ENCODE measurements at regions of chr1 and their contacts with region 1.

Region 1: DNA sequence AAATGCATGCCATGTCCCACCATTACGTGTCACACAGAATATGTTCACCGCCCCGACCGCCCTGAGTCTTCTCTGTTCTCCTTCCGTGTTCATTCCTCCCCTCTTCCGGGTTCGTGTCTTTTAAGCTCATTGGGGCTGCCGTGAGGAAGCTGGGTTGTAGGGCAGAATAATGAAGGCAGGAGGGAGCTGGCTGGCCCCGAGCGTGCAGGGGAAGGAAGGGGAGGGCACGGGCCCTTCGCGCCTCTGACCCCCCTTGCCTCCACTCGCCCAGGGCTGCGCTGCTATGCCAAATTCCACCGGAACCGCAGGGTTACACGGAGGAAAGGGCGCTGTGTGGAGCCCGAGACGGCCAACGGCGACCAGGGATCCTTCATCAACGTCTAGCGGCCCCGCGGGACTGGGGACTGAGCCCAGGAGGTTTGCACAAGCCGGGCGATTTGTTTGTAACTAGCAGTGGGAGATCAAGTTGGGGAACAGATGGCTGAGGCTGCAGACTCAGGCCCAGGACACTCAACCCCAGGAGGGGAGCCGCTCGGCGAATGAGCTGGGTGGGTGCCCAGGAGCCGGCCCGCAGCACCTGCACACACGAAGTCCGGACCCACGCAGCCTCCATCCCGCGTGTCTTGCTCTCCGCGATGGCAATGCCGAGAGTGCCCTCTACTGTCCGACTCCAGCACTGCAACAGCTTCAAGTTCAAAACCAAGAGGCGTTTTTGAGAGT is 16.5 kb upstream of the AGTRAP start:
- DNase-seq: peak; percentile 63
- H3K4me3 ChIP-seq: peak overlapping the region; percentile 23
- H3K27ac ChIP-seq: no peak overlapping the region
- H3K4me1 ChIP-seq: no peaks in the 10 kb centered on the region
- H3K27me3 ChIP-seq: no peaks in the 10 kb centered on the region
- CTCF ChIP-seq: peak; percentile 98

Region 2: GRCh38 chr1:11661103-11661502 is 58.4 kb before region 1 on chr1:
- CTCF ChIA-PET with region 1: interaction called, 13 read pairs
- POLR2A ChIA-PET with region 1: no interaction called
- intact Hi-C with region 1: no loop called
- DNase-seq: no peak
- H3K4me3 ChIP-seq: no peak overlapping the region
- H3K27ac ChIP-seq: no peak overlapping the region
- H3K4me1 ChIP-seq: no peaks in the 10 kb centered on the region
- H3K27me3 ChIP-seq: no peaks in the 10 kb centered on the region
- CTCF ChIP-seq: no peak

Region 3: DNA sequence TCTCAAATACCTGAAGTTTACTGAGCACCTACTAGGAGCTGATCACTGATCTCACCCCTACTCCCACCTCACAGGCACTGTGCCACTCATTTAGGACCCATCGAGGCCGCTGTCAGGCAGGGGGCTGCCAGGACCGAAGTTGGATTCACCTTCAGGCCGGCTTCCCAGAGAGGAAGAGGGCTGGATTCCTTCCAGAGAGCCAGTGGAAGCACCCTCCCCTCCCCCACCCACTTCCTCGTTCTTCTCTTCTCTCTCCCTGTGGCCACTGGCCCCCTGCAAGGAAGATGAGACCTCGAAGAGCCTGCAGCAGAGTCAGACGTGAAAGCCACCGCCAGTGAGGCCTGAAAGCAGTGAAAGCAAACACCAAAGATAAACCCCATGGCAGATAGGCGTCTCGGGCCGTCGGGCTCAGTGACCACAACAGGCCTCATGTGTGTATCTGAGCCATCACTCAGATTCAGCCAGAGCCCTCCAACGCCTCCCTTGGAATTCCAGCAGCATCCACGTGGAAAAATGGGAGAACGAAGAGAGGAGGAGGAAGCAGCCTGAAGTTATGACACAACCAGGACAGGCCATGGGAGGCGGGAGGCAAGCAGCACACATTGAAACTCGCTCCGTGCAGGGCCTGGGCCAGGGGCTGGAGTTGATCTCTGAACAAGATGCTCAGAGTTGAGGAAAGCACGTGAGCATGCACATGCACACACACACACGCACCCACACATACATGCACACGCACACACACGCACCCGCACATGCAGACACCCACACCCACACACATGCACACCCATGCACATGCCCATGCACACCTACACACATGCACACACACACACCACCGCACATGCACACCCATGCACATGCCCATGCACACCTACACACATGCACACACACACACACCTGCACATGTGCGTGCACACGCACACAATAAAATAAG is 10.3 kb after region 1 on chr1:
- CTCF ChIA-PET with region 1: no interaction called
- POLR2A ChIA-PET with region 1: no interaction called
- intact Hi-C with region 1: no loop called
- DNase-seq: no peak
- H3K4me3 ChIP-seq: no peak overlapping the region
- H3K27ac ChIP-seq: no peak overlapping the region
- H3K4me1 ChIP-seq: peaks cover 29% of the 10 kb centered on the region
- H3K27me3 ChIP-seq: no peaks in the 10 kb centered on the region
- CTCF ChIP-seq: no peak

Measured in A673 (cell line).